MCF 10A (cell line): ENCODE measurements at regions of chr20 and their contacts with region 1.

Region 1: GRCh38 chr20:63520504-63520933 is at the start of gene PPDPF:
- DNase-seq: peak; percentile 75
- H3K4me3 Mint-ChIP-seq: peak within 1 kb of the TSS; percentile 83
- H3K27ac Mint-ChIP-seq: peak within 1 kb of the TSS; percentile 42
- H3K4me1 Mint-ChIP-seq: no peaks in the 10 kb centered on the region
- H3K27me3 Mint-ChIP-seq: no peaks in the 10 kb centered on the region
- CTCF ChIP-seq: no peak
- total RNA-seq, gene PPDPF: 315 and 355 TPM in 2 replicates

Region 2: DNA sequence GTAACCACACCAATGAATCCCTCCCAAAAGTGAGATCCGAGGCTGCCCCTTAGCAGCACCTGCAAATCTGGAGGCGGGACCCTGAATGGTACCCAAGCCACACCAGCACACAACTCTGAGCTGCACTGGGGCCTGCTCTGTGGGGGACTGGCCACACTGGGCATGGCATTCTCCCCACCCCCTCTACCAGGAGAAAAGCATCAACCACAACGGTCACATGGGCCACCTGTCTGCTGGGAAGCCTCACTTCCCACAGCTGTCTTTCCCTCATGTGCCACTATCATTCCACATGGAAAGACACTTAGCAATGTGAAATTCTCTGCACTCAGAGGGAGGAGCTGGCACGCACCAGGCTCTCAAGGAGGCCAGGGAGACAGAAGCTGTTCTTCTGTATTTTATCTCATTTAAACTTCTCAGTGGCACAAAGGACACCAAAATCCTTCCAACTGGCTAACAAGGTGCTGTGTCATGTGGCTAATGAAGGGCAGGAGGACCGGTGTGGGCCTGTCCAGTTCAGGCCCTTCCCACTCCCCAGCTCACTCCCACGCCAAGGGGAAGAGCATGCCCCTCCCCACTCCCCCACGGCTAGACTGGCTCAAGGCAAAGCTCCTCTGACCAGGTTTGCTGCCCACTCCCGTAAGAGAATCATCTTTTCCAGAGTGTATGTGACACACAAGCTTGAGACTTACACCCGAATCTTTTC is 323.6 kb before region 1 on chr20:
- CTCF ChIA-PET with region 1: no interaction called
- POLR2A ChIA-PET with region 1: no interaction called
- intact Hi-C with region 1: no loop called
- DNase-seq: no peak
- H3K4me3 Mint-ChIP-seq: no peak overlapping the region
- H3K27ac Mint-ChIP-seq: no peak overlapping the region
- H3K4me1 Mint-ChIP-seq: no peaks in the 10 kb centered on the region
- H3K27me3 Mint-ChIP-seq: no peaks in the 10 kb centered on the region
- CTCF ChIP-seq: no peak

Region 3: GRCh38 chr20:63442100-63442493 is 78.4 kb before region 1 on chr20:
- CTCF ChIA-PET with region 1: interaction called, 3 read pairs
- POLR2A ChIA-PET with region 1: no interaction called
- intact Hi-C with region 1: loop called (anchors 1 kb)
- DNase-seq: peak; percentile 57
- H3K4me3 Mint-ChIP-seq: no peak overlapping the region
- H3K27ac Mint-ChIP-seq: no peak overlapping the region
- H3K4me1 Mint-ChIP-seq: no peaks in the 10 kb centered on the region
- H3K27me3 Mint-ChIP-seq: peaks cover 5% of the 10 kb centered on the region
- CTCF ChIP-seq: peak; percentile 65

Region 4: DNA sequence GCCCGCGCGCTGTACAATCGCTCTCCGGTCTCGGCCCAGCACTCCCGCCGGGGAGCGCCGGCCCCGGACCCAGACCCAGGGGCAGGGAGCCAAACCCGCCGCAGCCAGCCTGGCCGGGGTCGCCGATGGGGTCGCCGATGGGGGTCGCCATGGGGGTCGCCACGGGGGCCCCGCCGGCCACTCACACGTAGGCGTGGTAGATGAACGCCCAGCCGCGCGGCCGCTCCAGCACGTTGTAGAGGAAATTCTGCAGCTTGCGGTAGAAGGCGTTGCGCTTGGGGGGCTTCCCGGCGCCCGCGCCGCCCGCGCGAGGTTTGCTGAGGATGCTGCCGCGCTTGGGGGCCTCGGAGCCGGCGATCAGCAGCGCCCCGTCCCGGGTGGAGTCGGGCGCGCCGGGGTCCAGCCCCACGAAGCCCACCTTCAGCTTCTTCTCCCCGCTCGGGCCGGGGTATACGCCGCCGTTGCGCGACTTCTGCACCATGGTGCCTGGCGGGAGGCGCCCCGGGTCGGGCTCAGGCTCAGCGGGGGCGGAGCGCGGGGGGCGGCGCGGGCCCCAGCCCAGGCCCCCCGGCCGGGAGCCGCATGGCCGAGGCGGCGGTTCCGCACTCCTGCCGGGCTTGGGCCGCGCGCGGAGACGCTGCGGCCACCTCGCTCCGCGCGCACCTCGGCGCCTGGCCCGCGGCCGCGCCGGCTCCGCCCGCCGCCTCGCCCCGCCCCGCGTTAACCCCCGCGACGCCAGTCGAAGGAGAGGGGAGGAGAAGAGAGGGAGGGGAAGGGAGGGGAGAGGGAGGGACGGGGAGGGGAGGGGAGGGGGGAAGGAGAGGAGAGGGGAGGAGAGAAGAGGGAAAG is 48.3 kb before region 1 on chr20 and contains the start of gene KCNQ2:
- CTCF ChIA-PET with region 1: no interaction called
- POLR2A ChIA-PET with region 1: no interaction called
- intact Hi-C with region 1: no loop called
- DNase-seq: no peak
- H3K4me3 Mint-ChIP-seq: no peak within 1 kb of the TSS
- H3K27ac Mint-ChIP-seq: no peak within 1 kb of the TSS
- H3K4me1 Mint-ChIP-seq: no peaks in the 10 kb centered on the region
- H3K27me3 Mint-ChIP-seq: peaks cover 41% of the 10 kb centered on the region
- CTCF ChIP-seq: no peak
- total RNA-seq, gene KCNQ2: not detected in 2 replicates

Region 5: DNA sequence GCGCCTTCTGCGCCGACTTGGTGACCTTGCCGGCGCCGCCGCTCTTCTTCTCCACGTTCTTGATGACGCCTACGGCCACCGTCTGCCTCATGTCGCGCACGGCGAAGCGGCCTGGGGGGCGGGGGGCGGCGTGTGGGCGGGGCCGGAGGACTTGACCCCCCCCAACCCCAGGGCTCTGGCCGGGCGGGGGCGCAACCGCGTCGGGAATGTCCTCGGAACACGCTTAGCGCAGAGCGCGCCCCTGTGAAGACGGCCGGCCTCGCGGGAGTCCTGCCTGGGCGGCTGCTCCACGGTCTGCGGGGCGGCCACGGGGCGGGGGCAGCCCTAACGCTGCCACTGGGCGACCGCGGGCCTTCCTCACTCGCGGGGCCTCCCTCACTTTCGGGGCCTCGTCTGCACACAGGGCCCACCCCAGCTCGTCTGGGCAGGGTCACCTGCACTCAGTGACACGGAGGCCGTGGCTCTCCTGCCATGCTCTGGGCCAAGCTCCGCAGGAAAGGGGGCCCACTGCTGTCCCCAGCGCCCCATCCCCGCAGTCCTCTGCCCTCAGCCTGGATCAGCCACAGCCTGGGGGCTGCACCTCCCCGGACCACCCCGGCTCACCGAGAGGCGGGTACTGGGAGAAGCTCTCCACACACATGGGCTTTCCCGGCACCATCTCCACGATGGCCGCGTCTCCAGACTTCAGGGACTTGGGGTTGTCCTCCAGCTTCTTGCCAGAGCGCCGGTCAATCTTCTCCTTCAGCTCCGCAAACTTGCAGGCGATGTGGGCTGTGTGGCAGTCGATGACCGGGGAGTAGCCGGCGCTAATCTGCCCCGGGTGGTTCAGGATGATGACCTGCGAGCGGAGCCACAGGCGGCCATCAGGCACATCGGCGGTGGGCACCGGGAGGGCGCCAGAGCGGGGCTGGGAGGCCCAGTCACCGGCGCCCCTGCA is 31.9 kb before region 1 on chr20:
- CTCF ChIA-PET with region 1: no interaction called
- POLR2A ChIA-PET with region 1: no interaction called
- intact Hi-C with region 1: no loop called
- DNase-seq: no peak
- H3K4me3 Mint-ChIP-seq: no peak overlapping the region
- H3K27ac Mint-ChIP-seq: no peak overlapping the region
- H3K4me1 Mint-ChIP-seq: no peaks in the 10 kb centered on the region
- H3K27me3 Mint-ChIP-seq: peaks cover 11% of the 10 kb centered on the region
- CTCF ChIP-seq: no peak

Region 6: GRCh38 chr20:63544958-63545534 is 24.5 kb after region 1 on chr20:
- CTCF ChIA-PET with region 1: interaction called, 4 read pairs
- POLR2A ChIA-PET with region 1: interaction called, 124 read pairs
- intact Hi-C with region 1: no loop called
- DNase-seq: peak; percentile 82
- H3K4me3 Mint-ChIP-seq: no peak overlapping the region
- H3K27ac Mint-ChIP-seq: no peak overlapping the region
- H3K4me1 Mint-ChIP-seq: peaks cover 21% of the 10 kb centered on the region
- H3K27me3 Mint-ChIP-seq: no peaks in the 10 kb centered on the region
- CTCF ChIP-seq: no peak

Region 7: DNA sequence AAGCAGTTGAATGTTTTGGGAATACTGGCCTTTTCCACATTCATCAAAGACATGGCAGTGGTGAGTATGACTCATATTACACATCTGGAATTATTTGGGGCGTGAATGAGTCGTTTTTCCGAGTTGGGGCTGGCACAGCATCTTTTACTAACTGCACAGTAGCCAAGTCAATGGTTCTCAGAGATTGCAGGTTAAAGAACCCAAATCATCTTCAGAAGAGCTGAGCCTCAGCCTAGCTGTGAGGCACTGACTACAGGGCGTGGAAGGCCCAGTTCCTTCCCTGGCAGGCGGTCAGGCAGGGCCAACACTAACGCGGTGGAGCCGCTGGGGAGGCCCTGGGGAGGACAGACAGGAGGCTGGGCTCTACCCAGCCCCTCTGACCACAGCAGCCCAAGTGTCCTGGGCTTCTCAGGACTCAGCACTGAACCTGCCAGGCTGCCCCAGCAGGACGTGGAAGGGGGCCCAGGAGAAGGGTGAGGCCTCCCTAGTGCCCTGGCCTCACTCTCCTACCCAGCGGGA is 73.6 kb after region 1 on chr20:
- CTCF ChIA-PET with region 1: no interaction called
- POLR2A ChIA-PET with region 1: no interaction called
- intact Hi-C with region 1: no loop called
- DNase-seq: no peak
- H3K4me3 Mint-ChIP-seq: no peak overlapping the region
- H3K27ac Mint-ChIP-seq: no peak overlapping the region
- H3K4me1 Mint-ChIP-seq: no peaks in the 10 kb centered on the region
- H3K27me3 Mint-ChIP-seq: no peaks in the 10 kb centered on the region
- CTCF ChIP-seq: no peak